Left ventricle myocardium inferior (tissue), 1 donor: ENCODE measurements at regions of chr5 and their contacts with region 1.

Region 1: GRCh38 chr5:45038366-45038987 is 229.7 kb downstream of the MRPS30 start:
- DNase-seq: no peak
- H3K4me3 ChIP-seq: no peak overlapping the region
- H3K27ac ChIP-seq: no peak overlapping the region
- H3K4me1 ChIP-seq: peaks cover 4% of the 10 kb centered on the region
- H3K27me3 ChIP-seq: no peaks in the 10 kb centered on the region
- CTCF ChIP-seq: peak; percentile 76

Region 2: GRCh38 chr5:44774279-44774880 is 264.1 kb before region 1 on chr5:
- intact Hi-C with region 1: no loop called
- DNase-seq: no peak
- H3K4me3 ChIP-seq: no peak overlapping the region
- H3K27ac ChIP-seq: no peak overlapping the region
- H3K4me1 ChIP-seq: no peaks in the 10 kb centered on the region
- H3K27me3 ChIP-seq: no peaks in the 10 kb centered on the region
- CTCF ChIP-seq: peak; percentile 64

Region 3: DNA sequence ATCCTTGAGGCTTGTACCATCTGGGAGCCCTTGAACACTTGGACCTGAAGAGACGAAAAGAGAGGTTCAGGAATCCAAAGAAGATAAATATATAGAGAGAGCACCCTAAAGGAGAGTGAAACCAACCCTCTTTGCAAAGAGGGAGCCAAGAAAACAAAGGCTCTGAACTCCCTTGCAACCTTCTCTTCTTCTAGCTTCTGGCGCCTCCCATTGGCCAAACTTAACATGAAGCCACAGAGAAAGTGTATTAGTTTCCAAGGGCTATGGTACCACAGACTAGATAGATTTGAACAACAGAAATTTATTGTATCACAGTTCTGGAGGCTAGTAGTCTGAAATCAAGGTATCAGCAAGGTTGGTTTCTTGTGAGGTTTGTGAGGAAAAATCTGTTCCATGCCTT is 482.6 kb after region 1 on chr5:
- intact Hi-C with region 1: loop called (anchors 5 kb)
- DNase-seq: no peak
- H3K4me3 ChIP-seq: no peak overlapping the region
- H3K27ac ChIP-seq: no peak overlapping the region
- H3K4me1 ChIP-seq: no peaks in the 10 kb centered on the region
- H3K27me3 ChIP-seq: no peaks in the 10 kb centered on the region
- CTCF ChIP-seq: peak; percentile 61